ENCODE measurements at regions of chr18 and their contacts with region 1.

Region 1: DNA sequence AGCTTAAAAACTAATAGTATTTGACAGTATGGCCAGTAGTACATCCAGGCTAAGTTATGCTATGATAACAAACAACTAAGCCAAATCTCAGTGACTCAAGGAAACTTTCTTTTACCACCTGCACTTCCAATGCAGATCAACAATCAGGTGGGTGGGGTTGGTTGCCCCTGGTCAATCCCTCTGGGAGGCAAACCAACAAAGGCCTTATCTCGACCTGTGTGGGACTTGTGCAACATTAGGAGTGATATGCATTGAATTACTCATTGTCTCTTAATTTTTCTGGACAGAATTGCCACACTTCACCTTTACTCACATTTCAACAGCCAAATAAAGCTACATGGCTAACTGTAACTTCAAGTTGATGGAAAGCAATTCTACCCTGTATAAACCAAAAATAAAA is 1049.3 kb upstream of the CDH2 start:
- DNase-seq: no peak
- ATAC-seq: no peak
- H3K4me3 ChIP-seq: no peak overlapping the region
- H3K4me3 Mint-ChIP-seq: no peak overlapping the region
- H3K27ac ChIP-seq: no peak overlapping the region
- H3K27ac Mint-ChIP-seq: no peak overlapping the region
- H3K4me1 ChIP-seq: no peaks in the 10 kb centered on the region
- H3K4me1 Mint-ChIP-seq: no peaks in the 10 kb centered on the region
- H3K27me3 ChIP-seq: no peaks in the 10 kb centered on the region
- H3K27me3 Mint-ChIP-seq: no peaks in the 10 kb centered on the region

Region 2: GRCh38 chr18:29174891-29175290 is 51.3 kb before region 1 on chr18:
- CTCF ChIA-PET with region 1: no interaction called
- POLR2A ChIA-PET with region 1: no interaction called
- intact Hi-C with region 1: loop called in 1 of 2 experiments (anchors 5 kb)
- DNase-seq: no peak
- ATAC-seq: no peak
- H3K4me3 ChIP-seq: no peak overlapping the region
- H3K4me3 Mint-ChIP-seq: no peak overlapping the region
- H3K27ac ChIP-seq: no peak overlapping the region
- H3K27ac Mint-ChIP-seq: no peak overlapping the region
- H3K4me1 ChIP-seq: no peaks in the 10 kb centered on the region
- H3K4me1 Mint-ChIP-seq: no peaks in the 10 kb centered on the region
- H3K27me3 ChIP-seq: no peaks in the 10 kb centered on the region
- H3K27me3 Mint-ChIP-seq: no peaks in the 10 kb centered on the region